HEK293T (cell line): ENCODE measurements at regions of chr1 and their contacts with region 1.

Region 1: GRCh38 chr1:11719313-11720032 is 16.5 kb upstream of the AGTRAP start:
- DNase-seq: peak; percentile 63

Region 2: GRCh38 chr1:11413986-11414391 is 305.5 kb before region 1 on chr1:
- CTCF ChIA-PET with region 1: no interaction called
- POLR2A ChIA-PET with region 1: no interaction called
- DNase-seq: no peak

Region 3: DNA sequence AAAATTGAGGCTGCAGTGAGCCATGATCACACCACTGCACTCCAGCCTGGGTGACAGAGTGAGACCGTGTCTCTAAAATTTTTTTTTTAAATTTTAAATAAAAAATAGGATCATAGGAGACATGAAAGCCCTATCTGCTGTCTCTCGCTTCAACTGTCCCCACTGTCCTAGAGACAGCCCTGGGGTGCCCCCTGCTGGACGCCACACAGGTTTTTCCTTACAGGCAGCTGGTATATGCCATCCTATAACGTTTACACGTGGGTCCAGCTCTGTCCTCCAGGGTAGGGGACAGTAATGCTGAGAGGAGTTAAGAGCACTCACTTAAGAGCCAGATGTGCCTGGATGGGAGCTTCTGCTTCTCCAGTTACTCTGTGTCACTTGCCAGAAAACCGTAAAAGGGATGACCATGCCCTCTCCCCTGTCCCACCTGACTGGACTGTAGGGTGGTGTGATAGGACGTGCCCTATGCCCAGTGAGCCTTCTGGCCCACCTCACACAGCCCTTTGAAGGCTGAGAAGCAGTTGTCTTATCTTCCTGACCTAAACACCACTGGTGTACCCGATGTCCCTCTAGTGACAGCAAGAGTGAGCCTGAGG is 73.7 kb before region 1 on chr1:
- CTCF ChIA-PET with region 1: interaction called, 19 read pairs
- POLR2A ChIA-PET with region 1: interaction called, 3 read pairs
- DNase-seq: peak; percentile 73

Region 4: GRCh38 chr1:11761988-11762406 is 42.5 kb after region 1 on chr1 and contains the start of gene C1orf167:
- CTCF ChIA-PET with region 1: no interaction called
- POLR2A ChIA-PET with region 1: no interaction called
- DNase-seq: peak; percentile 79